ENCODE measurements at regions of chr22 and their contacts with region 1.

Region 1: GRCh38 chr22:42649246-42650099 is at the start of gene CYB5R3:
- DNase-seq: peak; percentile 51
- ATAC-seq: peak; percentile 64
- H3K4me3 ChIP-seq: peak within 1 kb of the TSS; percentile 84 to 100 (median 100)
- H3K27ac ChIP-seq: peak within 1 kb of the TSS; percentile 97
- H3K4me1 ChIP-seq: peaks cover 79% of the 10 kb centered on the region
- H3K27me3 ChIP-seq: peaks cover 0 to 6% of the 10 kb centered on the region in 2 experiments; a peak in 2 of 5 replicates
- CTCF ChIP-seq: 0 out of 2 replicates have a peak, but pooled peaks have one; percentile 17
- EP300 ChIP-seq: no peak
- POLR2A ChIP-seq: peak in 1 of 2 experiments; percentile 47; a peak in 1 of 4 replicates
- RAD21 ChIP-seq: 0 out of 2 replicates have a peak, but pooled peaks have one; percentile 26
- total RNA-seq, gene CYB5R3: 31.5 and 32.4 TPM in 2 replicates

Region 2: GRCh38 chr22:42621505-42622002 is 27.9 kb before region 1 on chr22:
- CTCF ChIA-PET with region 1: no interaction called
- POLR2A ChIA-PET with region 1: interaction called, 45 read pairs
- in situ Hi-C with region 1: no loop called
- intact Hi-C with region 1: loop called (anchors 1 kb)
- DNase-seq: peak; percentile 47
- ATAC-seq: peak; percentile 85
- H3K4me3 ChIP-seq: no peak overlapping the region
- H3K27ac ChIP-seq: no peak overlapping the region
- H3K4me1 ChIP-seq: peaks cover 2% of the 10 kb centered on the region; the same call in 1 of the 2 replicates
- H3K27me3 ChIP-seq: no peaks in the 10 kb centered on the region
- CTCF ChIP-seq: peak; percentile 94
- EP300 ChIP-seq: no peak
- POLR2A ChIP-seq: no peak
- RAD21 ChIP-seq: peak; percentile 92

Region 3: GRCh38 chr22:42805016-42805997 is 155.8 kb after region 1 on chr22:
- CTCF ChIA-PET with region 1: no interaction called
- POLR2A ChIA-PET with region 1: interaction called, 4 read pairs
- in situ Hi-C with region 1: no loop called
- intact Hi-C with region 1: loop called (anchors 10 kb)
- DNase-seq: peak; percentile 93
- ATAC-seq: peak; percentile 78
- H3K4me3 ChIP-seq: peak overlapping the region in 1 of 3 experiments; percentile 26; a peak in 1 of 6 replicates
- H3K27ac ChIP-seq: peak overlapping the region; percentile 96
- H3K4me1 ChIP-seq: peaks cover 88% of the 10 kb centered on the region
- H3K27me3 ChIP-seq: no peaks in the 10 kb centered on the region
- CTCF ChIP-seq: no peak
- EP300 ChIP-seq: peak in 1 of 2 experiments; percentile 90; a peak in 2 of 4 replicates
- POLR2A ChIP-seq: no peak
- RAD21 ChIP-seq: no peak

Region 4: GRCh38 chr22:42856865-42857704 is 207.6 kb after region 1 on chr22 and contains the start of gene ARFGAP3:
- CTCF ChIA-PET with region 1: no interaction called
- POLR2A ChIA-PET with region 1: no interaction called
- in situ Hi-C with region 1: no loop called
- intact Hi-C with region 1: loop called (anchors 10 kb)
- DNase-seq: peak; percentile 72
- ATAC-seq: peak; percentile 88
- H3K4me3 ChIP-seq: peak within 1 kb of the TSS; percentile 95 to 98 (median 96)
- H3K27ac ChIP-seq: peak within 1 kb of the TSS; percentile 94
- H3K4me1 ChIP-seq: peaks cover 39% of the 10 kb centered on the region
- H3K27me3 ChIP-seq: no peaks in the 10 kb centered on the region; a peak in 1 of 5 replicates
- CTCF ChIP-seq: no peak
- EP300 ChIP-seq: no peak; a peak in 1 of 4 replicates
- POLR2A ChIP-seq: peak; percentile 78 to 87
- RAD21 ChIP-seq: no peak; the same call in 1 of the 2 replicates
- total RNA-seq, gene ARFGAP3: 41.7 and 66.7 TPM in 2 replicates